Transverse colon (tissue), 4 donors: ENCODE measurements at regions of chrX and their contacts with region 1.

Region 1: DNA sequence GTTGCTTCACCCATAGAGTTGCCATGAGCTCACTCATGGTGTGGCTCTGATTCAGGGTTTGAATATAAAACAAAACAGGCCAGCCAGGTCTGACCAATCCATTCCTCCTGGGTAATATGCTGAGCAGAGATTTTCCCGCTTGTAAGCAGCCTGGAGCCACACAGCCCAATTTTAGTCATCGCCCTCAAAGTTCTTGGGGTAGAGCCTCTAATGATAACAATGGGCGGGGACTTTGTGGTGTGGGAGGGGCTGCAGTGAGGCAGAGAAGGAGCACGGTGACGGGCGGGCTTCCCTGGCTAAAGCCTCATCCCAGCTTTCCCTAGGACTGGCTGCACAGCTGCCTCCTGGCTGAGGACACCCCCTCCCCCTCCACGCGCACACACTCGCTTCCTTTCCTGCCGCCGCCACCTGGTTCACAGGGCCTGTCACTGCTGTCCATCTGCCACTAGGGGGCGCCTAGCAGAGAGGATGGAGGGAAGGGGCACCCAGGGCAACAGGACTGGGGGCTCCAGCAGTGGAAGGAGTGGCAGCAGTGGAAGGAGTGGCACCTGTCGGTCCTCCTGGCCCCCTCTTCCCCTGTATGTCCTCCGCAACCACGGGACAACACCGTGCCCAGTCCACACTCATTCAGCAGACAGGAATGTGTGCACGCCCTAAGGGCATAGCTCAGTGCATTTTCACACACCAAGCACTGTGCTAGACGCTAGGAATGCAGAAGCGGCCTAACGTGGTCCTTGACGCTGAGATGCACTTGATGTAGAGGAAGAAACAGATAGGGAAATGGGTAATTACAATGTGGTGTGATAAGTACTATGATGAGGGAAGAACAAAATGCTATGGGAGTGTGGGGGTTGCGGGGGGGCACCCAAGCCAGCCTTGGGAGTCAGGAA is 26.8 kb downstream of the PRPS1 start:
- DNase-seq: peak; percentile 59
- H3K4me3 ChIP-seq: no peak overlapping the region
- H3K27ac ChIP-seq: peak overlapping the region in 3 of 4 donors; percentile 12 to 41 (median 16)
- H3K4me1 ChIP-seq: no peaks in the 10 kb centered on the region
- H3K27me3 ChIP-seq: no peaks in the 10 kb centered on the region
- CTCF ChIP-seq: peak; percentile 57 to 71 (median 60)
- EP300 ChIP-seq: no peak
- POLR2A ChIP-seq: no peak

Region 2: GRCh38 chrX:107324499-107325320 is 330.4 kb before region 1 on chrX:
- in situ Hi-C with region 1: no loop called
- intact Hi-C with region 1: no loop called
- DNase-seq: no peak
- H3K4me3 ChIP-seq: no peak overlapping the region
- H3K27ac ChIP-seq: no peak overlapping the region
- H3K4me1 ChIP-seq: no peaks in the 10 kb centered on the region
- H3K27me3 ChIP-seq: no peaks in the 10 kb centered on the region
- CTCF ChIP-seq: no peak
- EP300 ChIP-seq: no peak
- POLR2A ChIP-seq: no peak

Region 3: GRCh38 chrX:107561468-107562215 is 93.5 kb before region 1 on chrX:
- in situ Hi-C with region 1: no loop called
- intact Hi-C with region 1: no loop called
- DNase-seq: no peak
- H3K4me3 ChIP-seq: no peak overlapping the region
- H3K27ac ChIP-seq: no peak overlapping the region
- H3K4me1 ChIP-seq: no peaks in the 10 kb centered on the region
- H3K27me3 ChIP-seq: no peaks in the 10 kb centered on the region
- CTCF ChIP-seq: no peak
- EP300 ChIP-seq: no peak
- POLR2A ChIP-seq: no peak

Region 4: DNA sequence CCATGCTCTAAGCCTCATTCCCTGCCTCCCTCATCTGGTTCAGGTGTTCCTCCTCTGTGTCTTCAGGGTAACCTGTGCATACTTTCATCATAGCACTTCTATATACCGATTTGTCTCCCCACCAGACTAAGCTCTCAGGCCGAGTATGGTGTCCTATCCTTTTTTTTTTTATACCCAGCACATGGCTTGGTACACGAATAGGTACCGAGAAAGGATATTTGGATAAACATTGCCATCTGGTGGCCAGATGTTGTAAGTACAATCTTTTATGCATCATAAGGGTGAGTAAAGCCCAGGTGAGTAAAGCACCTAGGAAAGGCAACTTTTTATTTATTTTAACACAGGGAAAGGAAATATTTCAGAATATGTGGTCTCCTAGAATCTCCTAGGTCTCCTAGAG is 238.9 kb after region 1 on chrX:
- in situ Hi-C with region 1: loop called in 1 of 4 experiments (anchors 25 kb)
- intact Hi-C with region 1: no loop called
- DNase-seq: no peak
- H3K4me3 ChIP-seq: no peak overlapping the region
- H3K27ac ChIP-seq: no peak overlapping the region
- H3K4me1 ChIP-seq: no peaks in the 10 kb centered on the region
- H3K27me3 ChIP-seq: no peaks in the 10 kb centered on the region
- CTCF ChIP-seq: peak; percentile 40 to 68 (median 50)
- EP300 ChIP-seq: no peak
- POLR2A ChIP-seq: no peak